CD14-positive monocyte (primary cell): ENCODE measurements at regions of chr17 and their contacts with region 1.

Region 1: DNA sequence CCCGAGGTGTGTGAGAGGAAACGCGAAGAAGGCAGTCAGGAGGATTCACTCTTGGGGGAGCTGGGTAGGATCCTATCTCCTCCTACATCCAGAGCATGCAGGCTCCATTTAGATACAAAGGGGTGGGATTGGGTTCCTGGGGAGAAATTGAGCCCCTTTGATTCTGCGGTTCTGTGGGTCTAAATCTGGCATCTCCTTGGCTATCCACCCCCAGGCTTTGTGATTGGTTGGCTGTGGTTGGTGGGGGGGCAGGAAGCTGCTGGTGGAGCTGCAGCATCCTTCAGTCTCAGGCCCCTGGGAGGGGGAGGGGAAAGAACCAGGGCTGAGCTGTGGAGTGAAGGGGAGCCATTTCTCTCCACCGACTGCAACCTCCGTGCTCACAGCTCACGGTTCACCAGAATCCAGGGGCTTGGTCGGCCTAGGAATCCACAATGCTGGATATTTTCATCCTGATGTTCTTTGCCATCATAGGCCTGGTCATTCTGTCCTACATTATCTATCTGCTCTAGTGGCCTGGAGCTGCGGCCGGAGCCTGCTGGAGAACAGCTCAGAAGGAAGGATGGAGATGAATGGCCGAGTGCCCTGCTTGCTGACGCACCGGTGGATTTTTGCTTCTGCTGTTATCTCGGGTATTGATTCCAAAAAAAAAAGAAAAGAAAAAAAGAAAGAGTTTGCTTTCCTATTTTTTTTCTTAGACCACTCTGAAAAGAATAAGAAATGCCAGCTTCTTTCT is at the start of gene LASP1NB:
- DNase-seq: no peak
- H3K4me3 ChIP-seq: peak within 1 kb of the TSS in 1 of 3 experiments; percentile 7
- H3K4me3 Mint-ChIP-seq: no peak within 1 kb of the TSS
- H3K27ac ChIP-seq: peak within 1 kb of the TSS; percentile 58 to 71
- H3K27ac Mint-ChIP-seq: peak within 1 kb of the TSS; percentile 71 to 89 (median 84)
- H3K4me1 ChIP-seq: peaks cover 33 to 47% of the 10 kb centered on the region in 2 donors
- H3K4me1 Mint-ChIP-seq: peaks cover 49% of the 10 kb centered on the region
- H3K27me3 ChIP-seq: no peaks in the 10 kb centered on the region
- H3K27me3 Mint-ChIP-seq: no peaks in the 10 kb centered on the region
- CTCF ChIP-seq: no peak

Region 2: DNA sequence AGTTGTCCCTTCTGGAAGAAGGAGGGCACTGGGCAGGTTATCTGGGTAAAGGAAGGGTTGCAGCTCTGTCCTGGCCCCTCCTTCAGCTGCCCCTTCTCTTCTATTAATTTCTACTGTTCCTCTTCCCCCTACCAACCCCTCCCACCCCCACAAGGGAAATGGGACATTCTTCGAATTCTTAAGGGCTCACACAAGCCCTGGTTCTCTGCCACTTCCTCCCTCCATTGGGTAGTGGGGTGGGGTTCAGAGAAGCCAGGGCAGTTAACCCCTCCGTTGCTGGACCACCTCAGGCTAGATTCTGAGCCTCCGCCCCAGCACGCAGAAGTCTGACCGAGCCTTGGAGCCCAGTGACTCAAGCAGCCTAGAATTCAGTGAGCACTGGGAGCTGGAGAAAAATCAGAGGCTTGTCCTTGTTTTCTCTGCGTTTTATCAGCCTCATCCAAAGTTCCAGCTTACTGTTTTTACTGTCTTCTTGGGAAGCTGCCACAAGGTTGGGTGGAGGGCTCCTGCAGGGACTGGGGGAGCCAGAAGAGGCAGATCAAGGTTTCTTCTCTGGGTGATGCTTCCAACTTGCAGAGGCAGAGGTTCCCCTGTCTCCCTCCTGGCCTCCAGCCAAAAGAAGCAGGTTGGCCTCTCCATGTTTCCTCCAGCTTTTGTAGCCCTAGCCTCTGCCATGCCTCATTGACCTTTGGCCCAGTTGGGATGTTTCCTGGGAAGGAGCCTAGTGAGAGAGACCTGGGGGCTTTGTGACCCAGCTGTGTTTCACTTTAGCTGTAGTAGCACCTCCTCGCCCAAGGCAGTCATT is 45.3 kb before region 1 on chr17:
- intact Hi-C with region 1: loop called in 1 of 2 experiments (anchors 5 kb)
- DNase-seq: no peak
- H3K4me3 ChIP-seq: peak overlapping the region in 1 of 3 experiments; percentile 32
- H3K4me3 Mint-ChIP-seq: no peak overlapping the region
- H3K27ac ChIP-seq: peak overlapping the region; percentile 50 to 66
- H3K27ac Mint-ChIP-seq: peak overlapping the region in 5 of 7 donors; percentile 46 to 87 (median 61)
- H3K4me1 ChIP-seq: peaks cover 64 to 83% of the 10 kb centered on the region in 2 donors
- H3K4me1 Mint-ChIP-seq: peaks cover 85% of the 10 kb centered on the region
- H3K27me3 ChIP-seq: no peaks in the 10 kb centered on the region
- H3K27me3 Mint-ChIP-seq: peaks cover 0 to 2% (median 2%) of the 10 kb centered on the region in 3 donors
- CTCF ChIP-seq: no peak

Region 3: GRCh38 chr17:39026980-39027451 is 101.6 kb after region 1 on chr17:
- intact Hi-C with region 1: no loop called
- DNase-seq: no peak
- H3K4me3 ChIP-seq: no peak overlapping the region
- H3K4me3 Mint-ChIP-seq: peak overlapping the region in 1 of 2 donors; percentile 69
- H3K27ac ChIP-seq: no peak overlapping the region
- H3K27ac Mint-ChIP-seq: no peak overlapping the region
- H3K4me1 ChIP-seq: peaks cover 3 to 7% of the 10 kb centered on the region in 2 donors
- H3K4me1 Mint-ChIP-seq: peaks cover 7% of the 10 kb centered on the region
- H3K27me3 ChIP-seq: peaks cover 23 to 32% of the 10 kb centered on the region in 2 donors
- H3K27me3 Mint-ChIP-seq: peaks cover 27 to 51% (median 39%) of the 10 kb centered on the region in 3 donors
- CTCF ChIP-seq: no peak

Region 4: DNA sequence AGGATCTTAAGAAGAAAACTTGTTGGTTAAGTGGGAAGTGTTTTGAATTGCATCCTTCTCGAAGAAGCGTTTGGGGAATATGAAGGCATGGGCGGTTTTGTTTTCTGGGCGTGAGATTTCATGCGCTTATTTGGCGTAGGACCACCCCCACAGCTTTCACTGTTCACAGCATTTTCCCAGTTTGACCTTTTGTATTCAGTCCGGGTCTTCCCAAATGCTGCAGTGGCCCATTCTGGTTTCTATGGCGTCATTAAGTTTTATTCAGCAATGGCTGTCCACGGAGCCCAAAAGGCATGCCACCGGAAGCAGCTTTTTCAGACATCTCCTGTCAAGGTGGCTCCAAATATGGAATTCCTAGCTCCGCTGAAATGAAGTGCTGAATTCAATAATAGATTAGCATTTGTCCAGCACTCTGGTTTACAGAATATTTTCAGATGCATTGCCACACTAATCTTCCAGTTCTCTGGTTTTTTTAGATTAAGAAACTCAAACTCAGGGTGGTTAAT is 132.3 kb after region 1 on chr17:
- intact Hi-C with region 1: no loop called
- DNase-seq: no peak
- H3K4me3 ChIP-seq: peak overlapping the region in 1 of 3 experiments; percentile 77
- H3K4me3 Mint-ChIP-seq: peak overlapping the region; percentile 79 to 90
- H3K27ac ChIP-seq: no peak overlapping the region
- H3K27ac Mint-ChIP-seq: no peak overlapping the region
- H3K4me1 ChIP-seq: peaks cover 8 to 16% of the 10 kb centered on the region in 2 donors
- H3K4me1 Mint-ChIP-seq: peaks cover 19% of the 10 kb centered on the region
- H3K27me3 ChIP-seq: no peaks in the 10 kb centered on the region
- H3K27me3 Mint-ChIP-seq: peaks cover 6 to 9% (median 9%) of the 10 kb centered on the region in 3 donors
- CTCF ChIP-seq: no peak